Natural killer cell (primary cell): ENCODE measurements at regions of chr13 and their contacts with region 1.

Region 1: DNA sequence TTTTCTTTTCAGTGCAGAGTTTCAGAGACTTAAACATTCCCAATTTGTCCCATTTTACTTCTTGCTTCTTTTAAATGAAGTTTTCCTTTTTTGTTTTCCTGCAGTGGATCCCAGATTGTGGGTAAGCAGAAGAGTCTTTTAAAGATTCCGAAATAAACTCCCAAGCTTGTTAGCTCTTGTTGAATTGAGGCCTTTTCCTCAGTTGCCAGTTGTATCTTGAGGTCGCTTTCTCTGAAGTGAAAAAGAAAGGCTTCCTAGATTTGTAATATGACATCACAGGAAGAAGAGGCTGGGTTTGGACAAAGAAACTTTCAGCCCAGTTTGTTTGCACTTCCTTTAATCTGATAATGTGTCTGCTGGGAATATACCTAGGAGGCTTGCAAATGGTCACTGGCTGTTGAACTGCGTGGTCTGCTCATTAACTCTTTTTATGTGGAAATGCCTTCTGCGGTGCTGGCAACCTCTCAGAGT is at the start of gene LPAR6:
- DNase-seq: peak in 1 of 2 donors; percentile 72
- ATAC-seq: peak; percentile 47 to 59 (median 50)
- H3K4me3 ChIP-seq: peak within 1 kb of the TSS; percentile 58
- H3K4me3 Mint-ChIP-seq: peak within 1 kb of the TSS; percentile 94
- H3K27ac ChIP-seq: peak within 1 kb of the TSS; percentile 87
- H3K27ac Mint-ChIP-seq: peak within 1 kb of the TSS; percentile 95 to 96
- H3K4me1 ChIP-seq: peaks cover 4% of the 10 kb centered on the region
- H3K4me1 Mint-ChIP-seq: peaks cover 36 to 53% of the 10 kb centered on the region in 2 donors
- H3K27me3 ChIP-seq: no peaks in the 10 kb centered on the region
- H3K27me3 Mint-ChIP-seq: no peaks in the 10 kb centered on the region
- CTCF ChIP-seq: no peak
- total RNA-seq, gene LPAR6: 38.5 to 48.9 (median 41.1) TPM

Region 2: DNA sequence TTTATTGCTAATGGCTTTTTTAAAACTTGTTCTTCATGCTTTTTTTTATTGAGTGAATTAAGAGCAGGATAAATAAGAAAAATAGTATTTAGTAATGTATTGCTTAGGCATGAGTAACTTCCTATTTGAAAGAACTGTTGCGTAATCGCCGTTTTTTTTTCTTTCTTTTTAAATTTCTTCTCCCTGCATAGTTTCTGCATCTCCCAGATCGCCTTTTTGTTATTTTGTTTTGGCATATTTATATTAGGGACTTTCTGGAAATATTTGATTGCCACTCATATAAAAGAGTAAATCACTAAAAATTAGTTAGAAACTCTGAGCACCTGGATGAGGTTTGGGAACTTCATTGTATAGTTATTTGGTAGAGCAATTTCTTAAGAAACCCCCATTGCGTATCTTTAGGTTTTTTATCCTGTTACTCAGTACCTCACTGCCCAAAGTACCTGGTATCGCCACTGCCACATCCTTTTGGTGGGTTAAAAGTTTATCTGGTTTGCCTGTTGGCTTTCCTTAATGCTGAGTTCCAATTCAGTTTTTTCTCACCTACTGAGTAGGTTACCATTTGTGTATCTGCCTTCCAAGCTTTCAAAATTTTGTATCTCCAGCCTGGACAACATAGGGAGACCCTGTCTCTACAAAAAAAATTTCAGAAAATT is 36.2 kb after region 1 on chr13:
- intact Hi-C with region 1: loop called (anchors 5 kb)
- DNase-seq: no peak
- ATAC-seq: peak in 1 of 3 donors; percentile 48
- H3K4me3 ChIP-seq: no peak overlapping the region
- H3K4me3 Mint-ChIP-seq: peak overlapping the region; percentile 80
- H3K27ac ChIP-seq: peak overlapping the region; percentile 31
- H3K27ac Mint-ChIP-seq: peak overlapping the region; percentile 67 to 74
- H3K4me1 ChIP-seq: peaks cover 4% of the 10 kb centered on the region
- H3K4me1 Mint-ChIP-seq: peaks cover 11 to 26% of the 10 kb centered on the region in 2 donors
- H3K27me3 ChIP-seq: no peaks in the 10 kb centered on the region
- H3K27me3 Mint-ChIP-seq: no peaks in the 10 kb centered on the region
- CTCF ChIP-seq: no peak